MCF 10A (cell line): ENCODE measurements at regions of chr1 and their contacts with region 1.

Region 1: DNA sequence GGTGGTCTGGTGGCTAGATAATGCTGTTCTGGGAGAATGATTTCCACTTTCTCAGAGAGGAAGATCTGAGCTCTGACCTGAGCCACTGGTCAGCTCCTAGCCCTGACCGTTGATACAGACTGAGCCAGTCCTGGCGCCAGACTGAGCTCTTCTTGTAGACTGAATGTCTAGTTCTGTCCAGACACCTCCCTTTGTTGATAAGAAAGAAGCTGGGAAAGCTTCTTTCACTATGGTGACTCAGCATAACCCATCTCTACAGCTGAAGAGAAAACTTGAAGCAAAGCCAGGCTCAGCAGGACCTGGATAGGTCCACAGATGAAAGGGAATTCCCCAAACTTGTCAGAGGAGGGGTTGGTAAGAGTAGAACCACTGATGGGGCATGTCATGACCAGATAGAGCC is 9.9 kb upstream of the TRABD2B start:
- DNase-seq: peak; percentile 79
- H3K4me3 Mint-ChIP-seq: no peak overlapping the region
- H3K27ac Mint-ChIP-seq: no peak overlapping the region
- H3K4me1 Mint-ChIP-seq: peaks cover 9% of the 10 kb centered on the region
- H3K27me3 Mint-ChIP-seq: no peaks in the 10 kb centered on the region
- CTCF ChIP-seq: no peak

Region 2: DNA sequence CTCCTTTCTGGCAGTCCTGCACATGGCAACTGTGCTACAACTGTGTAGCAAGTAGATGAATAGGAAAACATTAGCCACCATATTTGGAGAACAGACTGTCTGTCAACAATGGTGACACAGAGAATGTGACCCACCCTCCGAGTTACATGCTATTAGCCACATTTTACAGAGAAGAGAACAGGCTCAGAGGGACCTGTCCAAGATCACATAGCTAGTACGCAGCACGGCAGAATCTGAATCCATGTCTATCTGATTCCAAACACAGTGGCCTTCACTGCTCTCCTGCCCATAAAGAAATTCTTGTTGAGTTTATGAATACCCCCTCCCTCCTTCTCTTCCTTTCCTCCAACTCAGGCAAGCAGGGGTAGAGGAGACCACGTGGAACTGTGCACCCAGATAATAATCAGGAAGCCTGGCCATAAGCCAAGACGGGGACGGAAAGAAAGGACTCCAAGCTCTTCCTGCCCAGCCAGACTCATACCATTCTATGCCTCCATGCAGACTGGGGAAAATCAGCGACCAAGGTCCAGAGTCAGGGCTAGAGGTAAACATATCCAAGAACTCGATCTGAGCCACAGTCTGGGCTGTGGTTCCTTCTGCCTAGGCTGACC is 88.7 kb before region 1 on chr1:
- CTCF ChIA-PET with region 1: no interaction called
- POLR2A ChIA-PET with region 1: no interaction called
- intact Hi-C with region 1: no loop called
- DNase-seq: no peak
- H3K4me3 Mint-ChIP-seq: no peak overlapping the region
- H3K27ac Mint-ChIP-seq: no peak overlapping the region
- H3K4me1 Mint-ChIP-seq: peaks cover 23% of the 10 kb centered on the region
- H3K27me3 Mint-ChIP-seq: no peaks in the 10 kb centered on the region
- CTCF ChIP-seq: no peak

Region 3: GRCh38 chr1:48019714-48020315 is 12.8 kb after region 1 on chr1:
- CTCF ChIA-PET with region 1: interaction called, 65 read pairs
- POLR2A ChIA-PET with region 1: interaction called, 58 read pairs
- intact Hi-C with region 1: no loop called
- DNase-seq: peak; percentile 98
- H3K4me3 Mint-ChIP-seq: no peak overlapping the region
- H3K27ac Mint-ChIP-seq: peak overlapping the region; percentile 95
- H3K4me1 Mint-ChIP-seq: peaks cover 40% of the 10 kb centered on the region
- H3K27me3 Mint-ChIP-seq: no peaks in the 10 kb centered on the region
- CTCF ChIP-seq: no peak

Region 4: GRCh38 chr1:48026275-48026674 is 19.2 kb after region 1 on chr1:
- CTCF ChIA-PET with region 1: interaction called, 65 read pairs
- POLR2A ChIA-PET with region 1: interaction called, 10 read pairs
- intact Hi-C with region 1: no loop called
- DNase-seq: peak; percentile 86
- H3K4me3 Mint-ChIP-seq: no peak overlapping the region
- H3K27ac Mint-ChIP-seq: peak overlapping the region; percentile 99
- H3K4me1 Mint-ChIP-seq: peaks cover 42% of the 10 kb centered on the region
- H3K27me3 Mint-ChIP-seq: no peaks in the 10 kb centered on the region
- CTCF ChIP-seq: no peak